ENCODE measurements at regions of chr14 and their contacts with region 1.

Region 1: DNA sequence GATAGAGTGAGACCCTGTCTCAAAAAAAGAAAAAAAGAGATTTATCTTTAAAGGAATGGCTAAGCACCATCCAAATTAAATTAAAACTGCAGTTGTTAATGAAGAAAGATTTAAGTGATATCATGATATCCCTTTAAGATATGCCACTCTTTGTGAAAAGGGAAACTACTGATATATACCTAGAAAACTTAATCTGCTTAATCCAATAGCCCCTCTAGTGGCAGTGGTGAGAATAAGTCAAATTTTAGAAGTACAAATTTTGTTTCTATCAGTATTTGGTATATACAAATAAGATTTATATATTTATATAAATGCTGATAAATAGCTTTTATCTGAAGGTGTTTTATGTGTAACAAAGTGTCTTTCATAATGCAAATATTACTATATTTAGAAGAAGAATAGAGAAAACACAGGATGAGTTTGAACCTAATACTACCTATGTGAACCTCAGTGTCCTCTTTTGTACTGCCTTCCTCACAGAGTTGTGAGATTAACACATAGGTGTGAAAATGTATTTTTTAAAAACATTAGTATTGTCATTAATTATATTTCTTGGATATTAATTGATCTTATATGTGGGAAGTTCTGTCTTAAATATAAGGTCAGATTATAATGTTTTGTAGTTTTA is 51.4 kb upstream of the GARIN2 start:
- DNase-seq: no peak
- H3K4me3 Mint-ChIP-seq: no peak overlapping the region
- H3K27ac Mint-ChIP-seq: no peak overlapping the region
- H3K4me1 Mint-ChIP-seq: peaks cover 25% of the 10 kb centered on the region
- H3K27me3 Mint-ChIP-seq: no peaks in the 10 kb centered on the region

Region 2: DNA sequence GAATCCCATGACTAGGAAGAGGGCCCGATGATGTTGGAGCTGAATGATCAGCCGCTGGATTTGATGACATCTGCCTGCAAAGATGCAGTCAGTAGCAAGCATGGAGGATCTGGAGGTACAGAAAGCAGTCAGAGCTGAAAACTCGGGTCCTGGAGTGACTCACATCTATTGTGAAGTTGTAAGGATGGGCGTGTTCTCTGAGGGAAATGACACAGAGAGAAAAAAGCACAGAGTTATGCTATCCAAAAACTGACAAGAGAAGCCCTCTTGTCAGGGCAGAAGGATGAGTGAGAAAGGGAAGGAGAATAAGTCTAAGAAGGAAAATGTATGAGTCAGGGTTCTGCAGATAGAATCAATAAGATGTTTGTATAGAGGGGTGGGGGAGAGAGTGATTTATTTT is 1032.0 kb before region 1 on chr14:
- CTCF ChIA-PET with region 1: no interaction called
- POLR2A ChIA-PET with region 1: no interaction called
- intact Hi-C with region 1: no loop called
- DNase-seq: peak; percentile 34
- H3K4me3 Mint-ChIP-seq: no peak overlapping the region
- H3K27ac Mint-ChIP-seq: no peak overlapping the region
- H3K4me1 Mint-ChIP-seq: peaks cover 7% of the 10 kb centered on the region
- H3K27me3 Mint-ChIP-seq: peaks cover 3% of the 10 kb centered on the region

Region 3: DNA sequence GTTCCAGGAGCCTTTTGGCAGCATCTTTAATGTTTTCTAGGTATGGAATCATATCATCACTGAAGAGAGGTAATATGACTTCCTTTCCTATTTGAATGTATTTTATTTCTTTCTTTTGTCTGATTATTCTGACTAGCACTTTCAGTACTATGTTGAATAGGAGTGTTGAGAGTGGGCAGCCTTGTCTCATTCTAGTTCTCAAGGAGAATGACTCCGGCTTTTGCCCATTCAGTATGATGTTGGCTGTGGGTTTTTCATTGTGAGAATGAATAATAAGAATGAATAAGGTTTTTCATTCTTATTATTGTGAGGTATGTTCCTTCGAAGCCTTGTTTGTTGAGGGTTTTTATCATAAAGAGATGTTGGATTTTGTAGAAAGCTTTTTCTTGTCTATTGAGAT is 531.0 kb before region 1 on chr14:
- CTCF ChIA-PET with region 1: no interaction called
- POLR2A ChIA-PET with region 1: no interaction called
- intact Hi-C with region 1: loop called (anchors 1 kb)
- DNase-seq: no peak
- H3K4me3 Mint-ChIP-seq: no peak overlapping the region
- H3K27ac Mint-ChIP-seq: no peak overlapping the region
- H3K4me1 Mint-ChIP-seq: peaks cover 41% of the 10 kb centered on the region
- H3K27me3 Mint-ChIP-seq: no peaks in the 10 kb centered on the region

Region 4: GRCh38 chr14:66752109-66752508 is 385.7 kb before region 1 on chr14:
- CTCF ChIA-PET with region 1: no interaction called
- POLR2A ChIA-PET with region 1: no interaction called
- intact Hi-C with region 1: loop called (anchors 5 kb)
- DNase-seq: no peak
- H3K4me3 Mint-ChIP-seq: no peak overlapping the region
- H3K27ac Mint-ChIP-seq: no peak overlapping the region
- H3K4me1 Mint-ChIP-seq: peaks cover 7% of the 10 kb centered on the region
- H3K27me3 Mint-ChIP-seq: no peaks in the 10 kb centered on the region

Region 5: GRCh38 chr14:66833816-66834215 is 304.0 kb before region 1 on chr14:
- CTCF ChIA-PET with region 1: no interaction called
- POLR2A ChIA-PET with region 1: no interaction called
- intact Hi-C with region 1: no loop called
- DNase-seq: no peak
- H3K4me3 Mint-ChIP-seq: no peak overlapping the region
- H3K27ac Mint-ChIP-seq: no peak overlapping the region
- H3K4me1 Mint-ChIP-seq: no peaks in the 10 kb centered on the region
- H3K27me3 Mint-ChIP-seq: no peaks in the 10 kb centered on the region

Region 6: GRCh38 chr14:66998013-66998412 is 139.8 kb before region 1 on chr14:
- CTCF ChIA-PET with region 1: no interaction called
- POLR2A ChIA-PET with region 1: no interaction called
- intact Hi-C with region 1: loop called (anchors 1 kb)
- DNase-seq: peak; percentile 37
- H3K4me3 Mint-ChIP-seq: no peak overlapping the region
- H3K27ac Mint-ChIP-seq: no peak overlapping the region
- H3K4me1 Mint-ChIP-seq: peaks cover 10% of the 10 kb centered on the region
- H3K27me3 Mint-ChIP-seq: no peaks in the 10 kb centered on the region

Region 7: DNA sequence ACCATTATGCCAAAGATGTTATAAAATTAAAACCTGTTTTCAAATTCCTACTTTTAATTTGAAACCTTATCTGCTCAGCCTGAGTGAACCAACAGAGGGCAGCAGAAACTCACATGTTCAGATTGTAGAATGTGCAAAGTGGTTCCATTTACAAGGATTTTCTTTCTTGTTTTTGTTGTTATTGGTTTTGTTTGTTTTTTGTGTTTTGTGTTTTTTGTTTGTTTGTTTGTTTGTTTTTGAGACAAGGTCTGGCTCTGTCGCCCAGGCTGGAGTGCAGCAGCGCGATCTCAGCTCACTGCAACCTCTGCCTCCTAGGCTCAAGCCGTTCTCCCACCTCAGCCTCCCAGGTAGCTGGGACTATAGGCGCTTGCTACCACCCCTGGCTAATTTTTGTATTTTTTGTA is 28.6 kb after region 1 on chr14:
- CTCF ChIA-PET with region 1: no interaction called
- POLR2A ChIA-PET with region 1: no interaction called
- intact Hi-C with region 1: no loop called
- DNase-seq: peak; percentile 35
- H3K4me3 Mint-ChIP-seq: no peak overlapping the region
- H3K27ac Mint-ChIP-seq: no peak overlapping the region
- H3K4me1 Mint-ChIP-seq: peaks cover 2% of the 10 kb centered on the region
- H3K27me3 Mint-ChIP-seq: no peaks in the 10 kb centered on the region

Region 8: GRCh38 chr14:67187210-67187609 is 49.4 kb after region 1 on chr14:
- CTCF ChIA-PET with region 1: interaction called, 3 read pairs
- POLR2A ChIA-PET with region 1: no interaction called
- intact Hi-C with region 1: loop called (anchors 1 kb)
- DNase-seq: no peak
- H3K4me3 Mint-ChIP-seq: no peak overlapping the region
- H3K27ac Mint-ChIP-seq: no peak overlapping the region
- H3K4me1 Mint-ChIP-seq: peaks cover 19% of the 10 kb centered on the region
- H3K27me3 Mint-ChIP-seq: no peaks in the 10 kb centered on the region

Region 9: GRCh38 chr14:67228325-67228984 is 90.6 kb after region 1 on chr14:
- CTCF ChIA-PET with region 1: no interaction called
- POLR2A ChIA-PET with region 1: no interaction called
- intact Hi-C with region 1: no loop called
- DNase-seq: no peak
- H3K4me3 Mint-ChIP-seq: no peak overlapping the region
- H3K27ac Mint-ChIP-seq: no peak overlapping the region
- H3K4me1 Mint-ChIP-seq: no peaks in the 10 kb centered on the region
- H3K27me3 Mint-ChIP-seq: peaks cover 3% of the 10 kb centered on the region

Measured in activated CD4-positive, alpha-beta memory T cell treated with anti-CD3 and anti-CD28 coated beads for 36 hours (primary cell).